ENCODE measurements at regions of chr10 and their contacts with region 1.

Region 1: DNA sequence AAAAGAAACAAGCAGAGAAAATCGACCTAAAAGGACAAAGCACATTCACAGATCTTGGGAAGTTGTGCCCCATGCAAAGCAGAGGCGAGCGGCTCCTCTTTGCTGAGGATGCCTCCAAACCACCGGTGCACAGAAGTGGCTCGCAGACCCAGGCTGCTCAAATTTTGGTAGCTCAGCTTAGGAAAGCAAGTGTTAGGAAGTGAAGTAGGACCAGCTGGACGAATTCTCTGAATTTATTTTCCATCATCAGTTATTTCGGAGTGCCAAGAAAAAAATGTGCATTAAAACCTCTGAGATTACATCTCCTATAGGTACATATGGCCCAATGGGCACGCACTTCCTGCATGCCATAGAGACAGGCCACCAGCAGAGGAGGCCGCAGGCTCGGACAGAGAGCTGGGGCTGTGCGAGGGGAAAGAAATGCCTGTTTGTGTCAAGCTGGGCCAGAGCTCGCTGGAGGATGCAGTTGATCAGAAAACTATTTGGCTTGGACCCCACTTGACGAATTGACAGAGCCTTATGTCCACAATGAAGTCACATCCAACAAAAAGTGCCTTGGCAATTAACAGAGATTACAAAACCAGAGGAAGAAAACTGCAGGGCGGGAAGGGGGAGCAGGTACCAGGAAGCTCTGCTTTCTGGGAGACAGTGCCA is 122.3 kb upstream of the LYZL2 start:
- DNase-seq: peak; percentile 29 to 76
- ATAC-seq: peak; percentile 66 to 94 (median 82)
- H3K4me3 ChIP-seq: no peak overlapping the region
- H3K27ac ChIP-seq: peak overlapping the region in 6 of 10 donors; percentile 34 to 58 (median 44)
- H3K4me1 ChIP-seq: peaks cover 0 to 30% (median 13%) of the 10 kb centered on the region in 9 donors
- H3K27me3 ChIP-seq: peaks cover 0 to 3% (median 0%) of the 10 kb centered on the region in 7 donors
- CTCF ChIP-seq: peak in 8 of 9 donors; percentile 31 to 97 (median 86)

Region 2: GRCh38 chr10:31490858-31491504 is 739.2 kb after region 1 on chr10:
- intact Hi-C with region 1: loop called in 1 of 10 experiments (anchors 10 kb)
- DNase-seq: peak in 1 of 2 donors; percentile 23
- ATAC-seq: peak in 6 of 8 donors; percentile 41 to 65 (median 51)
- H3K4me3 ChIP-seq: no peak overlapping the region
- H3K27ac ChIP-seq: no peak overlapping the region
- H3K4me1 ChIP-seq: no peaks in the 10 kb centered on the region
- H3K27me3 ChIP-seq: no peaks in the 10 kb centered on the region
- CTCF ChIP-seq: peak; percentile 27 to 68 (median 60)

Region 3: GRCh38 chr10:31819391-31819820 is 1067.6 kb after region 1 on chr10:
- intact Hi-C with region 1: loop called in 1 of 10 experiments (anchors 10 kb)
- DNase-seq: peak in 1 of 2 donors; percentile 16
- ATAC-seq: peak in 7 of 8 donors; percentile 14 to 64 (median 34)
- H3K4me3 ChIP-seq: no peak overlapping the region
- H3K27ac ChIP-seq: peak overlapping the region in 3 of 10 donors; percentile 5 to 59 (median 15)
- H3K4me1 ChIP-seq: peaks cover 0 to 37% (median 23%) of the 10 kb centered on the region in 9 donors
- H3K27me3 ChIP-seq: no peaks in the 10 kb centered on the region
- CTCF ChIP-seq: no peak

Measured in heart right ventricle (tissue), 16 donors.